Activated CD4-positive, alpha-beta T cell treated with anti-CD3 and anti-CD28 coated beads for 36 hours (primary cell): ENCODE measurements at regions of chr4 and their contacts with region 1.

Region 1: DNA sequence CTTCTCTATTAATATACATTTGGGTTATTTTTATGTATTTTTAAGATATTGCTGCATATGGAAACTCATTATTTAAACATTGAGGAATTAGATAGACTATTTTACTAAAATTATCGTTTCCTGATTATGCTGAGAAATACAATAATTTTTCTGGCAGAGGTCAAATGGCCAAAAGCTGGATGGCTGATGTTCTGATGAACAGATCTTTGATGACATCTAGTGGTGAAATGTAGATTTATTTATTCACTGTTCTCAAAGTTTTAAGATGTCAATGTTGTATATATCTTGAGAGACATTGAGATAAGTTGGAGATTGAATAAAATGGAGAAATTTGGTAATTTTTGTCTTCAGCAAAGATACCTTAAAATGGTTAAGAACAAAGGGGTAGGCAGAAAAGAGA is 96.2 kb downstream of the UGT8 start:
- DNase-seq: no peak
- ATAC-seq: no peak
- H3K4me3 Mint-ChIP-seq: no peak overlapping the region
- H3K27ac Mint-ChIP-seq: no peak overlapping the region
- H3K4me1 Mint-ChIP-seq: no peaks in the 10 kb centered on the region
- H3K27me3 Mint-ChIP-seq: peaks cover 4% of the 10 kb centered on the region

Region 2: GRCh38 chr4:113278324-113278934 is 1416.3 kb before region 1 on chr4:
- CTCF ChIA-PET with region 1: no interaction called
- POLR2A ChIA-PET with region 1: no interaction called
- intact Hi-C with region 1: loop called in 1 of 2 experiments (anchors 2 kb)
- DNase-seq: peak; percentile 84
- ATAC-seq: peak; percentile 99
- H3K4me3 Mint-ChIP-seq: no peak overlapping the region
- H3K27ac Mint-ChIP-seq: no peak overlapping the region
- H3K4me1 Mint-ChIP-seq: no peaks in the 10 kb centered on the region
- H3K27me3 Mint-ChIP-seq: peaks cover 11% of the 10 kb centered on the region

Region 3: GRCh38 chr4:114677346-114677979 is 17.3 kb before region 1 on chr4:
- CTCF ChIA-PET with region 1: no interaction called
- POLR2A ChIA-PET with region 1: no interaction called
- intact Hi-C with region 1: no loop called
- DNase-seq: no peak
- ATAC-seq: no peak
- H3K4me3 Mint-ChIP-seq: no peak overlapping the region
- H3K27ac Mint-ChIP-seq: no peak overlapping the region
- H3K4me1 Mint-ChIP-seq: no peaks in the 10 kb centered on the region
- H3K27me3 Mint-ChIP-seq: peaks cover 7% of the 10 kb centered on the region